Tibial artery (tissue), 4 donors: ENCODE measurements at regions of chr12 and their contacts with region 1.

Region 1: DNA sequence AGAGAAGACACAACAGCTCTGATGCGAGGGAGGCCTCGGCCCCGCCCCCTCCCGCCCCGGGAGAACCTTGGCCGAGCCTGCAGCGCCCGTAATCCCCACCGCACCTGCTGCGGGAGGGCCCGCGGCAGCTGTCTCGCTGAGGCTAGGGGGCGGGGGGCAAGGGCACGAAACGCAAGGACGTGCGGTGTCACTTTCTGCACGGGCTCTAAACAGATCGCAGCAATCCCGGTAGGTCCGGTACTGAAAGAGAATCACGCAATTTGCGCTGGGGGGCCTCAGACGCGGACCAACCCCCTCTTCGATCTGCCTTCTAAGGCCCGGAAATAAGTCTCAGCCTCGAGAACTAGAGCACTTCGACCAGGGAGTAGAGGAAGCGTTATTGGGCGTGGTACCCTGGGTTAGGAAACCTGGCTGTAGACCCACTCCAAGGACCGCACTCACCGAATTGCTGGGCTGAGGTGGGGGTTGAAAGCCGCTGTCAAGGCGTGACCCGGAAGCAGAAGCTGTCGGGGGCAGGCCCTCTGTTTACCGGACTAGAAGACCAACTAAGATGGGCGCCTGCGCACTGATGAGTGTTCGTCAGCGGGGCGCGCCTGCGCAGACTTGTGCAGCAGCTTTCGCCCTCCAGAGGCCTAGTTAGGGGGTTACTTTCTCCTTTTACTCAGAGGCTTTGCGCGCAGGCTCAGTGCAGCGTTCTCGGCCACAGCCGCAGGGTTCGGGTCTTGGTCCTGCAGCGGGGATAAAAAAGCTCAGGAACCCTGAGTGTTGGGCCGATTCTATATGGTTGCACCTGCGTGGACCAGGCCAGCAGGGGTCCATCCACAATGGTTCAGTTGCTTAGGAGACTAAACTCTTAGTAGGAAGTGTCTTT is at the start of gene ASB8:
- DNase-seq: peak; percentile 99
- H3K4me3 ChIP-seq: peak within 1 kb of the TSS; percentile 83 to 97
- H3K27ac ChIP-seq: peak within 1 kb of the TSS; percentile 86 to 94
- H3K4me1 ChIP-seq: peaks cover 0 to 16% (median 12%) of the 10 kb centered on the region in 4 donors
- H3K27me3 ChIP-seq: peaks cover 0 to 4% of the 10 kb centered on the region in 2 donors
- CTCF ChIP-seq: peak; percentile 44 to 67

Region 2: DNA sequence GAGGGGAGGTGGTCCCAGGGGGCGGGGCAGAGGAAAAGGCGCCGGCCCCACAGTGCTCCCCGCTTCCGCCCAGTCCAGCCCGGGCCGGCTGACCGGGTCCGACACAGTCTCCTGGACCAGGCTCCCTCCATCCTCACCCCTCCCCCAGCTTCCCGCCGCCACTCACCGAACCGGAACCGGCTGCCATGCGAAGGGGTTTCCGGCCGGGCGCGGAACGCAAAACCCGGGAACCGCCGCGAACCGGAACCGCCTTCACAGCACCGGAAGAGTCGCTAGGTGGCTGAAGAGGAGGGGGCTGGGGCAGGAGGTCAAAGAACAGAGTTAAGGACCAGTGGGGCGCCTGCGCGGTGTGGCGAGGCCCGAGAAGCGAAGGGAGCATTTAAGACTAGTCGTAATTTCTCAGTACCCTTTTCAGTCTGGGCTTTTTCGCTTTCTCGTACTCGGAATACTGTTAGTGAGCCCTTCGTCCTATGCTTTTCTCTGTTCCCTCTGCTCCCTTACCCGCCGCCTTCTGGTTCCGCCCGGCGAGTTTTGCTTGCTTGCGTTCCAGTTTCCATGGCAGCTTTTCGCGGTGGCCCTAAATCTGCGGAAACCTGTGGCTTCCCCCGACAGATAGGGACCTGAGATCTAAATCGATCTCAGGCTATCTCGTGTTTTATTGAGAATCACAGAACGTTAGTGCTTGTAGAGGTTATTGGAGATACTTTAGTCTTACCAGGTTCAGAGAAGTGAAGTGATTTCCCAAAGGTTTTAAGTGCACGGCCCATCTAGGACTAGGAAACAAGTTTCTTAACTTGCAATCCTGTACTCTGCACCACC is 51.2 kb before region 1 on chr12 and contains the start of gene SENP1:
- intact Hi-C with region 1: loop called (anchors 5 kb)
- DNase-seq: peak; percentile 82 to 92
- H3K4me3 ChIP-seq: peak within 1 kb of the TSS; percentile 96 to 99
- H3K27ac ChIP-seq: peak within 1 kb of the TSS; percentile 87 to 94
- H3K4me1 ChIP-seq: peaks cover 0 to 22% (median 17%) of the 10 kb centered on the region in 4 donors
- H3K27me3 ChIP-seq: no peaks in the 10 kb centered on the region
- CTCF ChIP-seq: peak; percentile 32 to 38